Mucosa of descending colon (tissue), 3 donors: ENCODE measurements at regions of chr6 and their contacts with region 1.

Region 1: DNA sequence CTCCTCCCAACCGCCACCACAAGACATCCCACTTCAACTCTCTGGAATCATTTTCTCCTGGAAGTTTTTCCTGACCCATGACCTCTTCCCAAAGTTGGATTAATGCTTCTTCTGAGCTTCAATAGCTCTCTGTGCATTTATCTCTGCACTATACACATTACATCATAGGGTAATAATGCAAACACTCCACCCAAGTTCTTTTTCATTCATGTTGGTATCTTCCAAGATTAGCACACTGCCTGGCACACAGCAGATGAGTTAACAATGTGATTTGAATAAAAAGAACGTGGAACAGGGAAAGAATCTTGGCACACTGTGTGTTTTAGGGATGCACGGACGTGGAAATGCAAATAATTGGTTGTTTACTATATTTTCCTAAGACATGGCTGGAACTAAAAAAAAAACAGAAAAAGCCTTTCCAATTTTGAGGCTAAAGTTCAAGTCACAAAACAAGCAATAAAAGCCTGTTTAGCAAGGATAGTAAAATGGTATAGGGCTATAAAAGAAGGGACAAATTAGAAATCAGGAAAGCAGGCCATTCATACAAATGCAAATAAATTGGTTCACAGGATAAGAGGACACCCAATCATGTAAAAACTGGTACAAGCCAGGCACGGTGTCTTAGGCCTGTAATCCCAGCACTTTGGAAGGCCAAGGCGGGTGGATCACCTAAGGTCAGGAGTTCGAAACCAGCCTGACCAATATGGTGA is 1.6 kb upstream of the FAM135A start:
- DNase-seq: peak in 1 of 3 donors; percentile 59
- ATAC-seq: peak; percentile 60
- H3K4me3 ChIP-seq: no peak overlapping the region
- H3K4me1 ChIP-seq: peaks cover 19% of the 10 kb centered on the region
- CTCF ChIP-seq: no peak

Region 2: DNA sequence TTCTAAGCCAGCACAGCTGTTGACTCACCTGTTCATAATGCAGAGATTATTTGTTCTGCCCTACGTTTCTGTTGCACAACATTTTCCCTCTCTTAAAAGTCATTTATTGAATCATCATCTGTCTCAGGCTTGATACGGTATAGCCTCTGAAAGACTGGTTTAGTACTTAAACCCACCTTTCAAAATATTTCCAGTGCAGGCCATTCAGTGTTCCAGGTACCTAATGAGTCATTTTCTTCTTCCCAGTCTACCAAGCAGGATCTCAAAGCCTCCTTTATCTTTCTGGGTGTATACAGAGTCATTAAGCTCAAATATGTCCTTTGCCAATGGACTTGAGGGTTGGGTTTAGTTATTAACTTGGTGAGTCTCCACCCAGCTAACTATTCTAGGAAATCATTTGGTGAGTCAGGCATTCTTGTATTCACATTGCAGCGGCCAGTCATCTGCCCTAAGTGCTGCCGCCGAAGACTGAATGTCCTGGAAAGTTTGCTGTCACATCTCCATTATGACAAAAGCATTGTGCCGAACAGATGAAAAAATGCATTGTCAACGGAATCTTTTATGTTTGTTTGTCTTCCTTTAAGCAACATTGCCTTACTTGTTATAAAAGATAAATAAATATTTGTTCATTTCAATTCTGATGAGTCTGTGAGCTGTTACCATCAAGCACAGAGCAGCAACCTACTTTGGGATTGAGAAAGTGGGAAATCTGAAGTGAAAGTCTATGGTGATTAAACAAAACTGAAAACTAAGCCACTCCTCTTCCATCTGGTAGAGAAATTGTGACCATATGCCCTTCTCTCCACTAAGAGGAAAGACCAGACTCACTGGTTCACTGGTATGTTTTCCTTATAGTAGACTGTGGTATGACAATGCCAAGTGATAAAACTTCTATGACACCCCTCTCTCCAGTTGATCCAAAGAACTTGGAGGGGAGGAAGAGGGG is 12.6 kb before region 1 on chr6:
- intact Hi-C with region 1: loop called in 1 of 2 experiments (anchors 1 kb)
- DNase-seq: peak; percentile 59 to 75 (median 61)
- ATAC-seq: peak; percentile 93
- H3K4me3 ChIP-seq: no peak overlapping the region
- H3K4me1 ChIP-seq: peaks cover 21% of the 10 kb centered on the region
- CTCF ChIP-seq: no peak